ENCODE measurements at regions of chrX and their contacts with region 1.

Region 1: DNA sequence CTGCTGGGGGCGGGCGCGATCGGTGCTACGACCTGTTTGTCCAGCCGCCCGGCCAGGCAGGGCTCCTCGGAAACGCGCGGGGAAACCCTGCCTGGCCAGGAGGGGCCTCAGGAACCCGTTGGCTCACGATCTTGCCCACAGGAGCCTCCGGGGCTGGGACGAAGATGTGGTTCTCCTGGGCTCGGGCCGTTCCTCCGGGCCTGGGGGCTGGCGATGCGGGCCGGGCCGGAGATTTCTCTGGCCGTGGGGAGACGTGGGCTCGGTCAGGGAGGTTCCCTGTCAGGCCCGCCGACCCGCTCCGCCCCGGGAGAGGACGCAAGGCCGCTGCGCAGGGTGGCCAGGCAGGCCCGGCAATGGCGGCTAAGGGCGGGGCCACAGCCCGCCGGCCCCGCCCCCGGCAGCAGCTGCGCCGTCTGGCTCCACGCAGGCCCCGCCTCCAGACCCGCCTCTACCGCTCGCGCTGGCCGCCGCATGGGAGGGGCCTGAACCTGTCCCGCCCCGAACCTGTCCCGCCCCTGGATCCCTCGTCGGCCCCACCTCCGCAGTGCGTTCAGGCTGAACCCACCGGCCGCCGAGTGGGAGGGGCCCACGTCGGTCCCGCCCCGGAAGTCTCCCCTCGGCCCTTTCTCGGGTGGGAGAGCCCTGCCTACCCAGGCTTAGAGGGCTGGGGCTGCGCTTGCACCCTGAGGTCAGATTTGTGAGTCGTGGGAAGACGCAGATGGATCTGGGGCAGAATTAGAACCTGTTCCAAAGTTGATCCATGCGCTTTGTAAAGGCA is at the start of gene FAM3A:
- DNase-seq: peak; percentile 85 to 91 (median 88)
- ATAC-seq: peak; percentile 99
- H3K4me3 ChIP-seq: peak within 1 kb of the TSS; percentile 62
- H3K4me3 Mint-ChIP-seq: peak within 1 kb of the TSS; percentile 79 to 93 (median 86)
- H3K27ac ChIP-seq: peak within 1 kb of the TSS; percentile 93
- H3K27ac Mint-ChIP-seq: peak within 1 kb of the TSS; percentile 56 to 95 (median 90)
- H3K4me1 ChIP-seq: peaks cover 6 to 12% of the 10 kb centered on the region in 2 donors
- H3K4me1 Mint-ChIP-seq: peaks cover 13 to 34% (median 27%) of the 10 kb centered on the region in 7 donors
- H3K27me3 ChIP-seq: no peaks in the 10 kb centered on the region
- H3K27me3 Mint-ChIP-seq: no peaks in the 10 kb centered on the region
- total RNA-seq, gene FAM3A: 37.6 to 63.7 (median 50.9) TPM

Region 2: GRCh38 chrX:152941328-152942106 is 1574.5 kb before region 1 on chrX:
- CTCF ChIA-PET with region 1: no interaction called
- POLR2A ChIA-PET with region 1: no interaction called
- intact Hi-C with region 1: no loop called
- DNase-seq: peak; percentile 76 to 92 (median 88)
- ATAC-seq: peak; percentile 98
- H3K4me3 ChIP-seq: peak overlapping the region; percentile 67
- H3K4me3 Mint-ChIP-seq: peak overlapping the region; percentile 75 to 89 (median 86)
- H3K27ac ChIP-seq: peak overlapping the region; percentile 77
- H3K27ac Mint-ChIP-seq: peak overlapping the region; percentile 84 to 93 (median 87)
- H3K4me1 ChIP-seq: peaks cover 8 to 11% of the 10 kb centered on the region in 2 donors
- H3K4me1 Mint-ChIP-seq: peaks cover 0 to 13% (median 5%) of the 10 kb centered on the region in 7 donors
- H3K27me3 ChIP-seq: no peaks in the 10 kb centered on the region
- H3K27me3 Mint-ChIP-seq: no peaks in the 10 kb centered on the region

Region 3: GRCh38 chrX:154378782-154379591 is 137.1 kb before region 1 on chrX and contains the start of gene EMD:
- CTCF ChIA-PET with region 1: interaction called, 3 read pairs
- POLR2A ChIA-PET with region 1: interaction called, 5 read pairs
- intact Hi-C with region 1: loop called (anchors 1 to 10 kb)
- DNase-seq: peak; percentile 88 to 98 (median 96)
- ATAC-seq: peak; percentile 87
- H3K4me3 ChIP-seq: peak within 1 kb of the TSS; percentile 68
- H3K4me3 Mint-ChIP-seq: peak within 1 kb of the TSS; percentile 73 to 88 (median 84)
- H3K27ac ChIP-seq: peak within 1 kb of the TSS; percentile 99
- H3K27ac Mint-ChIP-seq: peak within 1 kb of the TSS; percentile 72 to 95 (median 92)
- H3K4me1 ChIP-seq: peaks cover 10 to 18% of the 10 kb centered on the region in 2 donors
- H3K4me1 Mint-ChIP-seq: peaks cover 4 to 21% (median 12%) of the 10 kb centered on the region in 7 donors
- H3K27me3 ChIP-seq: no peaks in the 10 kb centered on the region
- H3K27me3 Mint-ChIP-seq: no peaks in the 10 kb centered on the region
- total RNA-seq, gene EMD: 53.5 to 141 (median 89.9) TPM

Region 4: GRCh38 chrX:154436983-154437719 is 78.9 kb before region 1 on chrX and contains the start of gene GDI1:
- CTCF ChIA-PET with region 1: interaction called, 3 read pairs
- POLR2A ChIA-PET with region 1: interaction called, 3 read pairs
- intact Hi-C with region 1: loop called in 1 of 2 experiments (anchors 2 kb)
- DNase-seq: peak; percentile 39 to 72 (median 62)
- ATAC-seq: peak; percentile 82
- H3K4me3 ChIP-seq: peak within 1 kb of the TSS; percentile 48
- H3K4me3 Mint-ChIP-seq: peak within 1 kb of the TSS; percentile 75 to 90 (median 86)
- H3K27ac ChIP-seq: peak within 1 kb of the TSS; percentile 85
- H3K27ac Mint-ChIP-seq: peak within 1 kb of the TSS; percentile 82 to 97 (median 91)
- H3K4me1 ChIP-seq: no peaks in the 10 kb centered on the region
- H3K4me1 Mint-ChIP-seq: peaks cover 0 to 36% (median 17%) of the 10 kb centered on the region in 7 donors
- H3K27me3 ChIP-seq: no peaks in the 10 kb centered on the region
- H3K27me3 Mint-ChIP-seq: no peaks in the 10 kb centered on the region
- total RNA-seq, gene GDI1: 106 to 174 (median 140) TPM

Region 5: DNA sequence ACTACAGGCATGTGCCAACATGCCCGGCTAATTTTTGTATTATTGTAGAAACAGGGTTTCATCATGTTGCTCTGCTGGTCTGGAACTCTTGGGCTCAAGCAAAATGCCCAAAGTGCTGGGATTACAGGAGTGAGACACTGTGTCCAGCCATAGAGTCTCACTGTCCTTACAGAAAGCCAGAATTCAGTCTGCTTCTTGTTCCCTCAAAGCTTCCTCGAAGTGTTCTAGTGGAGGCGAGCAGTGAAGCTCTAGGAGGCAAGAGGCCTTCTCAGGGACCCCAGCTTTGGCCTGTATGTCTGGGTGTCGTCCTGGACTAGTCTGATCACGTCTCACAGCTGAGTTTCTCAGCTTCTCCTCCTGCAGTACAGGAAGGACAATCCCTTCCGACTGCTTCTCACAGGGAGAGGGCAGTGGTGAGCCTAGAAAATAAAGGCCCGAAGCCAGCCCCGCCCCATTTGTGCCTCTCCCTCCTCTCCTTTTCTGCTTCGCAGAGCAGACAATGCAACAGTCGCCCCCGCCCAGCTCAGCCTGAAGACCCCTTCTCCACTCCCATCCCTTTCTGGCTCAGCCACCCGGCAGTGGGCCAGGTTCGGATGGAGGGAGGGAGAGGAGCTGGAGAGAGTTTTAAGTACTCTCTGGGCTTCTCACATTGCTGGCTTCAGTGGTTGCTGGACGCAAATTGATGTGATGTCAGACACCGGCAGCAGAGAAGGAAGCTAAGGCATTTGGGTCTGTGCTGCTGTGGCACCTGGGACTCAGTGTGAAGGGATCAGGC is 11.0 kb after region 1 on chrX:
- CTCF ChIA-PET with region 1: interaction called, 7 read pairs
- POLR2A ChIA-PET with region 1: interaction called, 9 read pairs
- intact Hi-C with region 1: loop called (anchors 1 kb)
- DNase-seq: peak in 8 of 9 donors; percentile 29 to 55 (median 46)
- ATAC-seq: peak; percentile 93
- H3K4me3 ChIP-seq: no peak overlapping the region
- H3K4me3 Mint-ChIP-seq: peak overlapping the region in 8 of 10 donors; percentile 28 to 72 (median 43)
- H3K27ac ChIP-seq: peak overlapping the region; percentile 50
- H3K27ac Mint-ChIP-seq: peak overlapping the region; percentile 38 to 85 (median 80)
- H3K4me1 ChIP-seq: peaks cover 5 to 23% of the 10 kb centered on the region in 2 donors
- H3K4me1 Mint-ChIP-seq: peaks cover 7 to 28% (median 20%) of the 10 kb centered on the region in 7 donors
- H3K27me3 ChIP-seq: no peaks in the 10 kb centered on the region
- H3K27me3 Mint-ChIP-seq: no peaks in the 10 kb centered on the region

Region 6: GRCh38 chrX:154547245-154548027 is 31.4 kb after region 1 on chrX and contains the start of gene IKBKG:
- CTCF ChIA-PET with region 1: no interaction called
- POLR2A ChIA-PET with region 1: interaction called, 3 read pairs
- intact Hi-C with region 1: loop called (anchors 1 kb)
- DNase-seq: peak; percentile 83 to 92 (median 91)
- ATAC-seq: peak; percentile 89
- H3K4me3 ChIP-seq: peak within 1 kb of the TSS; percentile 75
- H3K4me3 Mint-ChIP-seq: peak within 1 kb of the TSS; percentile 84 to 98 (median 90)
- H3K27ac ChIP-seq: peak within 1 kb of the TSS; percentile 93
- H3K27ac Mint-ChIP-seq: peak within 1 kb of the TSS; percentile 88 to 97 (median 93)
- H3K4me1 ChIP-seq: peaks cover 25 to 44% of the 10 kb centered on the region in 2 donors
- H3K4me1 Mint-ChIP-seq: peaks cover 24 to 58% (median 42%) of the 10 kb centered on the region in 7 donors
- H3K27me3 ChIP-seq: no peaks in the 10 kb centered on the region
- H3K27me3 Mint-ChIP-seq: no peaks in the 10 kb centered on the region
- total RNA-seq, gene IKBKG: 29.6 to 45.5 (median 38.8) TPM

Region 7: DNA sequence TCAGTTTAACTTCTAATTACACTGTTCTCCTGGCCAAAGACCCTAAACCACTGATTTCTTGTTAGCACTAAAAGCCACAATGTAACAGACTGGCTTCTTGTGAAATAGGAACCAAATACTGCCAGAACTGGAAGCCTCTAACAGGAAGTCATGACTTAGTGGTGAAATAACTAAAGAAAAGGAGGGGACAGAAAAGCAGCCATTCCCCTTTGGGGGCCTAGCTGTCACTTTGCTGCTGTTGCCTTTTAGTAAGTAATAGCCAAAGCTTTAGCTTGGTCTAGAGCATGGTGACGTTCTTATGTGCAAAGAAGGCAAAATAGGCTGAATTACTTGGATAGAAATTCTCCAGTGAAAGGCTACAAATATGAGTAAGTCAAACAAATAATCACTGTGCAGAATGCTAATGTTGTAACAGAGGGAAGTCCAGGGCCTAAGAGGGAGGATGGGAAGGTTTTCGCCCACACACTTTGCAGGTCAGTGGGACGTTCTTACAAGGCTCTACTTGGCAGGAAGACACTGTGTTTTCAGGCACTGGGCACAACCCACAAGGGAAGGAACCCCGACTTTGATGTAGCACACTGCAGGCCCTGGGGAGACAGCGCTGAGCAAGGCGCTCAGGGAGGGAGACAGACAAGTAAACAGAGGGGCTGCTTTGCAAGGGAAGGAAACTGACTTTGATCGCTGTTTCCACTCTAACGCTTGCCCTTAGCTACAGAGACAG is 218.2 kb after region 1 on chrX:
- CTCF ChIA-PET with region 1: no interaction called
- POLR2A ChIA-PET with region 1: no interaction called
- intact Hi-C with region 1: no loop called
- DNase-seq: peak in 4 of 9 donors; percentile 17 to 33 (median 28)
- ATAC-seq: peak; percentile 72
- H3K4me3 ChIP-seq: no peak overlapping the region
- H3K4me3 Mint-ChIP-seq: peak overlapping the region; percentile 34 to 87 (median 78)
- H3K27ac ChIP-seq: peak overlapping the region; percentile 40
- H3K27ac Mint-ChIP-seq: peak overlapping the region; percentile 81 to 95 (median 89)
- H3K4me1 ChIP-seq: peaks cover 43 to 75% of the 10 kb centered on the region in 2 donors
- H3K4me1 Mint-ChIP-seq: peaks cover 42 to 93% (median 89%) of the 10 kb centered on the region in 7 donors
- H3K27me3 ChIP-seq: no peaks in the 10 kb centered on the region
- H3K27me3 Mint-ChIP-seq: no peaks in the 10 kb centered on the region

Measured in naive thymus-derived CD4-positive, alpha-beta T cell (primary cell).